Thyroid gland (tissue), 4 donors: ENCODE measurements at regions of chr15 and their contacts with region 1.

Region 1: DNA sequence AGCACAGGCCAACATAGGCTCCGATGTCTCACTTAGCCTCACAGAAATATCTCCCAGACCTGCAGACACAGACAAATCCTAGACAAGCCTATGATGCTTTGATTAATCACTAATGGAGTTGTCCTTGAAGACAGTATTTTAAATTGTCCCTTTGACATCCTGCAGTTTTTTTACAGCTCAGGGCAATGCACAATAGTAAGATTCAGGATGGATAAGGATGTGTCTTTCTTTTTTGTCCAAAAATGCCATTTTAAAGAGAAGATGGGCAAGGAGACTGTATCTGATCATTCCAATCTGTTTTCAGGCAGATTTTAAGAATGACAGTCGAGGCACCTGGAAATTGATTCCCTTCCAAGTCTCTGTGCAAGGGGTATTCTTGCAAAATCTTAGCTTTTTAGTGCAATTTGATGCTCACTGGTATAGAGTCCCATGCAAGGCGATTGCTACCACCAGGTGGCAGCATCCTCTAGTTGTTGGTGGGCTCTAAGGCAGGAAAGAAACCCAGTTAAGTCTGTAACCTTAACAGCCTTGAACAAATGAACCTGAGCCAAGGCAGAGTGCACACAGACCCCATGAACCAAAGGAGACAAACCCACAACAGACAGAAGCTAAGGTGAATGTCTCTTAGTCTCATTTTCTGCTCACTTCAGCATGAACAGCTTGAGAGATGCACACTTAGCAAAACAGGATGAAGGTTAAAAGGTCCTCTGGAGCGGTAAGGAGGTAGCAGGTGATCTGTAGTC is 51.2 kb upstream of the MINAR1 start:
- DNase-seq: peak; percentile 86 to 87
- H3K4me3 ChIP-seq: no peak overlapping the region
- H3K27ac ChIP-seq: no peak overlapping the region
- H3K4me1 ChIP-seq: peaks cover 3 to 9% of the 10 kb centered on the region in 2 donors
- H3K27me3 ChIP-seq: no peaks in the 10 kb centered on the region
- CTCF ChIP-seq: peak; percentile 73 to 90 (median 84)
- POLR2A ChIP-seq: no peak

Region 2: GRCh38 chr15:79310983-79311900 is 69.7 kb before region 1 on chr15 and contains the start of gene TMED3:
- intact Hi-C with region 1: no loop called
- DNase-seq: peak; percentile 80 to 82
- H3K4me3 ChIP-seq: peak within 1 kb of the TSS; percentile 34 to 76 (median 76)
- H3K27ac ChIP-seq: peak within 1 kb of the TSS in 2 of 3 donors; percentile 40 to 51
- H3K4me1 ChIP-seq: peaks cover 42 to 43% of the 10 kb centered on the region in 2 donors
- H3K27me3 ChIP-seq: no peaks in the 10 kb centered on the region
- CTCF ChIP-seq: peak in 2 of 6 experiments; percentile 28 to 40
- POLR2A ChIP-seq: peak in 1 of 2 donors; percentile 81
- total RNA-seq, gene TMED3: 156 to 235 (median 190) TPM

Region 3: DNA sequence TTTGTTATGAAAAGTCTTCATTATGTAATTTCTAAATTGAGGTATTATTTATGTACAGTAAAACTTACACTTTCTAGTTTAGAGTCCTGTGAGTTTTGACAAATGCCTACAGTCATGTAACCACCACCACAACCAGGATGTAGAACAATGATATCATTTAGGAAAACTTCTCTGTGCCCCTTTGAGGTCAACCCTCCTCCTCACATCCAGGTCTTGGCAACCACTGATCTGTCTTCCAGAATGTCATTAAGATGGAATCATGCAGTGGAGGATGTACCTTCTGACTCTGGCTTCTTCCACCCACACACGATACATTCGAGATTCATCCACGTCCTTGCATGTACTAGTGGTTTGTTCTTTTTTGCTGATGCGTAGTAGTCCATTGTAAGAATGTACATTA is 74.4 kb after region 1 on chr15:
- intact Hi-C with region 1: no loop called
- DNase-seq: no peak
- H3K4me3 ChIP-seq: no peak overlapping the region
- H3K27ac ChIP-seq: no peak overlapping the region
- H3K4me1 ChIP-seq: no peaks in the 10 kb centered on the region
- H3K27me3 ChIP-seq: no peaks in the 10 kb centered on the region
- CTCF ChIP-seq: no peak
- POLR2A ChIP-seq: no peak

Region 4: GRCh38 chr15:79989682-79990081 is 608.8 kb after region 1 on chr15:
- intact Hi-C with region 1: loop called (anchors 10 kb)
- DNase-seq: no peak
- H3K4me3 ChIP-seq: no peak overlapping the region
- H3K27ac ChIP-seq: no peak overlapping the region
- H3K4me1 ChIP-seq: no peaks in the 10 kb centered on the region
- H3K27me3 ChIP-seq: no peaks in the 10 kb centered on the region
- CTCF ChIP-seq: no peak
- POLR2A ChIP-seq: no peak